Transverse colon (tissue), 4 donors: ENCODE measurements at regions of chr1 and their contacts with region 1.

Region 1: GRCh38 chr1:79235301-79236002 is 228.9 kb upstream of the ADGRL4 start:
- DNase-seq: no peak
- H3K4me3 ChIP-seq: no peak overlapping the region
- H3K27ac ChIP-seq: no peak overlapping the region
- H3K4me1 ChIP-seq: no peaks in the 10 kb centered on the region
- H3K27me3 ChIP-seq: no peaks in the 10 kb centered on the region
- CTCF ChIP-seq: no peak
- EP300 ChIP-seq: no peak
- POLR2A ChIP-seq: no peak

Region 2: DNA sequence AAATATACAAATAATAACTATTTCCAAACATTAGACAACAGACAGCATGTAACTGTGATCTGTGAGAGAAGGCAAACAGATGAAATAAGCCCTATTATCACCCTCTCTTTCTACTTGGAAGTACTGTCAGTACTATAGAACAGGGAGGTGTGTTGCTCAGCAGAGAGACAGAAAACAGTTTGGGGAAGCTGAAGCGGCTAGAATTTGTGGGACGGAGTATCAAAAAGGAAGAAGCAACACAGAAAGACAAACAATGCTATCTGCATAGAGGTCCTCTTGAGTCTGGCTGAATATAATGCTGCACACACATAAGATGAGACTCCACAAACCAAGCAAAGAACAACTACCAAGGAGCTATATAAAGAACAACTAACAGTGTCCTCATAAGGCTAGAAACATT is 1612.4 kb before region 1 on chr1:
- in situ Hi-C with region 1: no loop called
- intact Hi-C with region 1: loop called (anchors 10 kb)
- DNase-seq: no peak
- H3K4me3 ChIP-seq: no peak overlapping the region
- H3K27ac ChIP-seq: no peak overlapping the region
- H3K4me1 ChIP-seq: peaks cover 0 to 9% (median 0%) of the 10 kb centered on the region in 4 donors
- H3K27me3 ChIP-seq: no peaks in the 10 kb centered on the region
- CTCF ChIP-seq: no peak
- EP300 ChIP-seq: no peak
- POLR2A ChIP-seq: no peak

Region 3: DNA sequence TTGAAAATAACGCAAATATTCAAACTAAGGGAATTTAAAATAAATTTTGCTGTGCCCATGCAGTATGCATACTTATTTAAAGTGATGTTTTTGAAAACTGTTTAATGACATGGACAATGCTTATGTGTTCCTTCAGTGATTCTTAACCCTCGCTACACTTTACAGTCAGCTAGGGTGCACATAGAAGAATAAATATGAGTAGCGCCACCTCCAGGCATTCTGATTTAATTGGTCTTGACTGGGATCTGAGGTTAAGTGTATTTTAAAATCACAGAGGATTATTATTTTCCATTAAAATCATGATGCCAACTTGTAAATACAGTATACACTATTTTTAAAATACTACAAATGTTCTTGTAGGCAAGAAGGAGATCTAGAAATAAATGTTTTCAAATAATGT is 144.6 kb after region 1 on chr1:
- in situ Hi-C with region 1: no loop called
- intact Hi-C with region 1: no loop called
- DNase-seq: no peak
- H3K4me3 ChIP-seq: no peak overlapping the region
- H3K27ac ChIP-seq: no peak overlapping the region
- H3K4me1 ChIP-seq: no peaks in the 10 kb centered on the region
- H3K27me3 ChIP-seq: no peaks in the 10 kb centered on the region
- CTCF ChIP-seq: no peak
- EP300 ChIP-seq: no peak
- POLR2A ChIP-seq: no peak

Region 4: GRCh38 chr1:80462006-80462405 is 1226.6 kb after region 1 on chr1:
- in situ Hi-C with region 1: no loop called
- intact Hi-C with region 1: loop called (anchors 10 kb)
- DNase-seq: no peak
- H3K4me3 ChIP-seq: no peak overlapping the region
- H3K27ac ChIP-seq: no peak overlapping the region
- H3K4me1 ChIP-seq: no peaks in the 10 kb centered on the region
- H3K27me3 ChIP-seq: no peaks in the 10 kb centered on the region
- CTCF ChIP-seq: no peak
- EP300 ChIP-seq: no peak
- POLR2A ChIP-seq: no peak